Common myeloid progenitor, CD34-positive (primary cell): ENCODE measurements at regions of chr12 and their contacts with region 1.

Region 1: GRCh38 chr12:49018261-49019119 is at the start of gene PRKAG1:
- DNase-seq: peak; percentile 100
- H3K4me3 ChIP-seq: peak within 1 kb of the TSS; percentile 83 to 97 (median 89)
- H3K27ac ChIP-seq: peak within 1 kb of the TSS; percentile 97 to 98
- H3K4me1 ChIP-seq: peaks cover 7 to 33% (median 28%) of the 10 kb centered on the region in 4 experiments
- H3K27me3 ChIP-seq: no peaks in the 10 kb centered on the region

Region 2: GRCh38 chr12:48977315-48978281 is 40.9 kb before region 1 on chr12:
- CTCF ChIA-PET with region 1: interaction called, 64 read pairs
- POLR2A ChIA-PET with region 1: no interaction called
- DNase-seq: peak; percentile 81 to 95 (median 94)
- H3K4me3 ChIP-seq: peak overlapping the region in 2 of 7 experiments; percentile 58 to 66
- H3K27ac ChIP-seq: no peak overlapping the region
- H3K4me1 ChIP-seq: peaks cover 0 to 57% (median 53%) of the 10 kb centered on the region in 4 experiments
- H3K27me3 ChIP-seq: peaks cover 4 to 97% (median 56%) of the 10 kb centered on the region in 5 experiments

Region 3: DNA sequence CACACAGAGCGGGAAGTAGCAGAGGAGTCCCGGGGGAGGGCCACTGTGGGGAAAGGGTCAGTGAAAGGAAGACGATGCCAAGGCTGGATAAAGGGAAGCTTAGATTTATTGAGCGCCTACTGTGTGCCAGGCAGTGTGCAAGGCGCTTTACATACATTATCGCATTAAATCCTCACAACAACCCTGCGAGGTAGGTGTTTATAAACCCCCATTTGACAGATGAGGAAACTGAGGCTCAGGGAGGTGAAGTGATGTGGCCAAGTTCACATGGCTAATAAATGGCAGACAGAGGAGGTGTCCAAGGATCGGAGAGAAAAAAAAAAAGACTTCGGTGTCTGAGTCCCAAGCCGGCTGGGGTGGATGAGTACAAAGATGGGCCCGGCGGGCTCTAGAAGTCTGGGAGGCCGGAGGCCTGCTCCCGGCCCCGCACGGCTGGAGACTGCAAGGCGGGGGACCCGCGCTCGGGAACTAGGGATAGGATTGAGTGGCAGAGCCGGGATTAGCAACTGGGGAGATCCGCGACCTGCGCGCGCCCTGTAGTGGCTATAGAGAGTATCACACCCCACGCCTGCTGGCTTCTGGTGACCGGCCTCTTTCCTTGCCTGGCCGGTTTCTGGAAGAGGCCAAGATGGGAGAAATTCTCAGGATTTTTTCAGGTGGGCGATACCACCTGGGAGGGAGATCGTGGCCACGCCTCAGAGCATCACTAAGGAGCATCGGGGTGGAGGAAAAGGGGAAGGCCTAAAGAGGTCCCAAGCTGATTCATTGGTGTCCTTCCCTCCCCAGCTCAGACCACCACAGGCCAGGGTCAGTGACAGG is 23.2 kb before region 1 on chr12:
- CTCF ChIA-PET with region 1: interaction called, 271 read pairs
- POLR2A ChIA-PET with region 1: interaction called, 104 read pairs
- DNase-seq: peak in 2 of 3 donors; percentile 41 to 55
- H3K4me3 ChIP-seq: peak overlapping the region in 2 of 7 experiments; percentile 25 to 40
- H3K27ac ChIP-seq: no peak overlapping the region
- H3K4me1 ChIP-seq: peaks cover 2 to 41% (median 39%) of the 10 kb centered on the region in 4 experiments
- H3K27me3 ChIP-seq: peaks cover 5 to 81% (median 32%) of the 10 kb centered on the region in 5 experiments

Region 4: GRCh38 chr12:49037111-49037946 is 18.8 kb after region 1 on chr12:
- CTCF ChIA-PET with region 1: interaction called, 72 read pairs
- POLR2A ChIA-PET with region 1: interaction called, 3 read pairs
- DNase-seq: no peak
- H3K4me3 ChIP-seq: no peak overlapping the region
- H3K27ac ChIP-seq: no peak overlapping the region
- H3K4me1 ChIP-seq: no peaks in the 10 kb centered on the region
- H3K27me3 ChIP-seq: no peaks in the 10 kb centered on the region

Region 5: DNA sequence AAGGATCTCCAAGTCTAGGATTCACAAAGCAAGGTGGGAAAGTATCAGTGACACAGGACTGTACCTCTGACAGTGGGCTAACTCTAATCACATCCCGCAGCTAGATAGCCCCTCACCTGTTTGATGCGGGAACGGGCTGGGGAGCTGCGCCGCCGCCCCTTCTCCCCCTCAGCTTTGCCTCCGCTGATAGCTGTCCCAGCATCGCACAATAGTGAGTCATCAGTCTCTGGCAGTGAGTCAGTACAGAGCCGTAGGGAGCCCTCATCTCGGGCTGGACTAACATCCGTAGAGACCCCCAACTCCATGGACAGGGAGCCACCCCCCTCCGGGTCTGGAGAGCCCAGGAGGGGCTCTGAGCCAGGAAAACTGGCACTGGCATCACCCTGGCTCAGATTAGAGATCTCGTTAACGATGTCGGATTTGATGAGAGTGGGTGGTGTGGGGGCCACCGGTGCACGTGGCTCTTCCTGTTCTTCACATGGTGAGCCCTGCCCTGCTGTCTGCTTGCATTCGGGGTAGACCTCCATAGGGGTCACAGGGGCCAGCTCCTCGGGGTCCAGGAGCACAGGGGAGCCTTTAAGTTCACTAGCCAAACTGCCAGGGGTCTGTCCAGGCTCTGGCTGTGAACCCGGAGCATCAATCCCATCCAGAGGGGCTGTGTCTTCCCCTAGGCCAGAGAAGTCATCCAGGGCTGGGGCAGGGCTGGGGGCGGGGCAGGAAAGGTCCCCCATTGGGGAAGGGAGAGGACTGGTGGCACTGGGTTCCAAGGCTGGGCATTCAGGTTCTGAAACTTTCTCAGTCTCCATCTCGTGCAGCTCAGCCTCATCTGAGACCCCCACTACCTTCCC is 31.3 kb after region 1 on chr12:
- CTCF ChIA-PET with region 1: interaction called, 27 read pairs
- POLR2A ChIA-PET with region 1: interaction called, 4 read pairs
- DNase-seq: no peak
- H3K4me3 ChIP-seq: no peak overlapping the region
- H3K27ac ChIP-seq: no peak overlapping the region
- H3K4me1 ChIP-seq: no peaks in the 10 kb centered on the region
- H3K27me3 ChIP-seq: no peaks in the 10 kb centered on the region